Ovary (tissue), 10 donors: ENCODE measurements at regions of chr2 and their contacts with region 1.

Region 1: GRCh38 chr2:200373973-200374416 is 67.5 kb downstream of the SPATS2L start:
- DNase-seq: no peak
- H3K4me3 ChIP-seq: no peak overlapping the region
- H3K27ac ChIP-seq: no peak overlapping the region
- H3K4me1 ChIP-seq: peaks cover 11% of the 10 kb centered on the region
- H3K27me3 ChIP-seq: no peaks in the 10 kb centered on the region
- CTCF ChIP-seq: no peak
- EP300 ChIP-seq: no peak
- POLR2A ChIP-seq: no peak

Region 2: DNA sequence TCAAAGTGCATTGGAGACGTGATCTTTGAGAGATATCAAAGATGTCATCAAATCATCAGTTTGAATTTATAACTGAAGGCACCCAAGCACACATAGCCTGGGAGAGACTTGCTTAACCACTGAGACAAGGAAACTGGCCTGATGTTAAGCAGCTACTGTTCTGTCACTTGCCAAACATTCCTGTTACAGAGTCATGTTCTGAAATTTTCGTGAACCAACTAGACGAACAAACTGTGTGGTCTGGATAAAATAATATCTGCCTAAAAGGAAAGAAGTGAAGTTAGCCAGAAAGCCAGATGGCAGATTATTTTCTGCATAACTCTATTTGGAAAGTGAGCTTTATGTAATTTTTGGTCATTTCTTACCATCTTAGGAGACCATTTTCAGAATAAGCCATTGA is 16.1 kb before region 1 on chr2:
- intact Hi-C with region 1: loop called in 1 of 4 experiments (anchors 2 kb)
- DNase-seq: no peak
- H3K4me3 ChIP-seq: no peak overlapping the region
- H3K27ac ChIP-seq: no peak overlapping the region
- H3K4me1 ChIP-seq: peaks cover 11% of the 10 kb centered on the region
- H3K27me3 ChIP-seq: no peaks in the 10 kb centered on the region
- CTCF ChIP-seq: no peak
- EP300 ChIP-seq: no peak
- POLR2A ChIP-seq: no peak